ENCODE measurements at regions of chr12 and their contacts with region 1.

Region 1: GRCh38 chr12:12803186-12803585 is 10.0 kb upstream of the DDX47 start:
- DNase-seq: peak; percentile 51
- ATAC-seq: peak; percentile 75
- H3K4me3 Mint-ChIP-seq: peak overlapping the region; percentile 82
- H3K27ac Mint-ChIP-seq: peak overlapping the region; percentile 92
- H3K4me1 Mint-ChIP-seq: peaks cover 55% of the 10 kb centered on the region
- H3K27me3 Mint-ChIP-seq: peaks cover 3% of the 10 kb centered on the region

Region 2: GRCh38 chr12:12786716-12787601 is 16.2 kb before region 1 on chr12:
- POLR2A ChIA-PET with region 1: interaction called, 17 read pairs
- DNase-seq: peak; percentile 82
- ATAC-seq: peak; percentile 93
- H3K4me3 Mint-ChIP-seq: peak overlapping the region; percentile 82
- H3K27ac Mint-ChIP-seq: peak overlapping the region; percentile 83
- H3K4me1 Mint-ChIP-seq: peaks cover 33% of the 10 kb centered on the region
- H3K27me3 Mint-ChIP-seq: no peaks in the 10 kb centered on the region

Region 3: DNA sequence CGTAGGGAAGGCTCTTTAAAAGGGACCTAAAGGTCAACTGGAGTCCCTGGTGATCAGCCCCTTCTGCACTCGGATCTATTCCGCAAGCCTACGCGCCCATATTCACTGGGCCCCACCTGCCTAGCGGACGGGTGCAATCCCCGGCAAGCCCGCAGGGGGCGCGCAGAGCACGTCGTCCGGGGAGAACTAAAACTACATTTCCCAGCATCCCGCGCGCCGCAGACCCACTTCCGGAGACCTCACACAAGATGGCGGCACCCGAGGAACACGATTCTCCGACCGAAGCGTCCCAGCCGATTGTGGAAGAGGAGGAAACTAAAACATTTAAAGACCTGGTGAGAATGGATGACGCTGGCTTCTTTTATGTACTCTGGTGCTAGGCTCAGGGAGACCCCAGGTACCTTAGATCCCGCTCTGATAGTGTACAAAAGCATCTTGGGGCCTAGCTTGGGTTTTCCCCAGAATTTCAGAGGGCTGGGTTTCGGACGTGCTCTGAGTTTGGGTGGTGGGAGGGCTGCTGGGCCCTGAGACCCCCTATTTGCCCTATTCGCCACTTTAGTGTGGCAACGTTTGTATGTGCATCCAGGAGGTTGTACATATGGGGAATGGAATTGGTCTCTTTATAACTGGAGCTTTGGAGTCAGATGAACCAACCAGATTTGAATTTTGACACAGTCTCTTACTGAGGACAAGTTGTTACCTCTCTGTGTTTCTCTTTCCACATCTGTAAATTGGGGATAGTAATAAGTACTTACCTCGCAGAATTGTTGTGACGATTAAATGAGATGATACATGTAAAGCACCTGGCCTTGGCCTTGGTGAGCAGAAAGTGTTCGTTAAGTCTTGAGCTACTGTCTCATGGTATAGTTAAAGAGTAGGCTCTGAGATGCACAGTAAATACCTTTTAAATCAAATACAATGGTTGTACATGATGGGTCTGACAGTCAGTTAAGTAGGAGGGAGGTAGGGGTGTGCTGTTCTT is 10.2 kb after region 1 on chr12 and contains the start of gene DDX47:
- POLR2A ChIA-PET with region 1: interaction called, 11 read pairs
- DNase-seq: peak; percentile 99
- ATAC-seq: peak; percentile 77
- H3K4me3 Mint-ChIP-seq: peak within 1 kb of the TSS; percentile 84
- H3K27ac Mint-ChIP-seq: peak within 1 kb of the TSS; percentile 84
- H3K4me1 Mint-ChIP-seq: peaks cover 59% of the 10 kb centered on the region
- H3K27me3 Mint-ChIP-seq: no peaks in the 10 kb centered on the region
- total RNA-seq, gene DDX47: 56.3 to 60.8 TPM